CD4-positive, alpha-beta memory T cell (primary cell): ENCODE measurements at regions of chr3 and their contacts with region 1.

Region 1: GRCh38 chr3:43690400-43691119 is at the start of gene ABHD5:
- DNase-seq: peak; percentile 95 to 97 (median 96)
- H3K4me3 ChIP-seq: peak within 1 kb of the TSS; percentile 38 to 98
- H3K4me3 Mint-ChIP-seq: peak within 1 kb of the TSS; percentile 91 to 97 (median 93)
- H3K27ac ChIP-seq: peak within 1 kb of the TSS; percentile 79
- H3K27ac Mint-ChIP-seq: peak within 1 kb of the TSS; percentile 89 to 98 (median 94)
- H3K4me1 ChIP-seq: peaks cover 20% of the 10 kb centered on the region
- H3K4me1 Mint-ChIP-seq: peaks cover 23 to 35% (median 30%) of the 10 kb centered on the region in 4 donors
- H3K27me3 ChIP-seq: no peaks in the 10 kb centered on the region
- H3K27me3 Mint-ChIP-seq: no peaks in the 10 kb centered on the region
- total RNA-seq, gene ABHD5: 6.2 to 7.0 TPM

Region 2: DNA sequence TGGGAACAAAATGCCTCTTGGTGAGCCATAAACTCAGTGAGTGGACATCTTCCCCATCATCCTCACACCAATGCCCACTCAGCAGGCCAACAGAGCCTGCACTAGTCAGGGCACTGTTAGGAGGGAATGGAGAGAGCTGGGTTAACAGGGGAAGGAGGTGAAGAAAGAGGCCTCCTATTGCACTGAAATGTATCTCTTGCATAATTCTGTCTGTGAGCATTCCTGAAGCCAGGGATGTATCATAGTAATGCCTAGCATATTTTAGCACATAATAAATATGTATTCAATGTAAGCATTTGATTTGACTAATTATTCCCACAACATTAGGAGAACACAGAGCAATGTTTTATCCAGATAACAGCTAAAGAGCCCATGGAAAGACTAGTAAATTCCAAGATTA is 149.9 kb before region 1 on chr3:
- CTCF ChIA-PET with region 1: interaction called, 3 read pairs
- POLR2A ChIA-PET with region 1: no interaction called
- intact Hi-C with region 1: loop called (anchors 1 kb)
- DNase-seq: no peak
- H3K4me3 ChIP-seq: no peak overlapping the region
- H3K4me3 Mint-ChIP-seq: no peak overlapping the region
- H3K27ac ChIP-seq: no peak overlapping the region
- H3K27ac Mint-ChIP-seq: no peak overlapping the region
- H3K4me1 ChIP-seq: no peaks in the 10 kb centered on the region
- H3K4me1 Mint-ChIP-seq: no peaks in the 10 kb centered on the region
- H3K27me3 ChIP-seq: no peaks in the 10 kb centered on the region
- H3K27me3 Mint-ChIP-seq: no peaks in the 10 kb centered on the region

Region 3: DNA sequence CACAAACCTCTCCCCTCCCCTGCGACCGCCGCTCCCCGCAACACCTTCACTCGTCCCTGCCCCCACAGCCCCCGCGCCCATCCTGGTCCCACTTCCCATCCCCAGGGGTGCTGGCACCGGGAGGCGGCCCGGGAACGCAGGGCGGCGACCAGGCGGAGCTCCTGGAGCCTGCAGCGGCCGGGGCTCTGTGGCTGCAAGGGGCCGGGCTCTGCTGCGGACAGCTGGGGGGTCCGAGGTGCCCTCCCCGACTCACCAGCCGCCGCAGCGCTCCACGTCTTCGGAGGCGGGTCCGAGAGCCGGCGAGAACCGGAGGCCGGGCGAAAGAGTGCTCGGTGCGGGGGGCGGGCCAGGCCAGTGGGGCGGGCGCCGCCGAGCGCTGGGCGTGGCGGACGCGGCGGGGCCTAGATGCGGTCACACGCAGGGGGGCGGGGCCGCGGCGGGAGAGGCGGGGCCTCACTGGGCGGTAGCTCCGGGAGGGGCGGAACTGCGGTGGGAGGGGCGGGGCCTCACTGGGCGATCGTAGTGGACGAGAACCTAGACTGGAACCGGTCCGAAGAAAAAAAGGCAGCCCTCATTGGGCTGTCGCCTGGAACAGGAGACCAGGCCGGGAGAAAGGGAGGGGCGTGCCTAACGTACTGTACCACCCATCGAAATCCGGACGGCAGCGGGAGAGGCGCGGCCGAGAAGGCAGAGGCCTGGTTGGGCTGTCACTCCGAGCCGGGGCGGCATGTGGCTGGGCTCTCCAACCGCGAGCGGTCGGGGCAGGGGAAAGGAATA is 68.7 kb before region 1 on chr3 and contains the start of gene ANO10:
- CTCF ChIA-PET with region 1: interaction called, 3 read pairs
- POLR2A ChIA-PET with region 1: interaction called, 27 read pairs
- intact Hi-C with region 1: loop called (anchors 1 kb)
- DNase-seq: peak; percentile 91 to 93 (median 93)
- H3K4me3 ChIP-seq: peak within 1 kb of the TSS; percentile 36 to 59
- H3K4me3 Mint-ChIP-seq: peak within 1 kb of the TSS; percentile 88 to 94 (median 91)
- H3K27ac ChIP-seq: peak within 1 kb of the TSS; percentile 54
- H3K27ac Mint-ChIP-seq: peak within 1 kb of the TSS; percentile 77 to 96 (median 91)
- H3K4me1 ChIP-seq: peaks cover 12% of the 10 kb centered on the region
- H3K4me1 Mint-ChIP-seq: peaks cover 10 to 24% (median 13%) of the 10 kb centered on the region in 4 donors
- H3K27me3 ChIP-seq: no peaks in the 10 kb centered on the region
- H3K27me3 Mint-ChIP-seq: no peaks in the 10 kb centered on the region
- total RNA-seq, gene ANO10: 9.7 to 9.9 TPM

Region 4: GRCh38 chr3:43753781-43754201 is 63.2 kb after region 1 on chr3:
- CTCF ChIA-PET with region 1: interaction called, 10 read pairs
- POLR2A ChIA-PET with region 1: interaction called, 26 read pairs
- intact Hi-C with region 1: loop called (anchors 2 kb)
- DNase-seq: no peak
- H3K4me3 ChIP-seq: no peak overlapping the region
- H3K4me3 Mint-ChIP-seq: no peak overlapping the region
- H3K27ac ChIP-seq: no peak overlapping the region
- H3K27ac Mint-ChIP-seq: no peak overlapping the region
- H3K4me1 ChIP-seq: peaks cover 34% of the 10 kb centered on the region
- H3K4me1 Mint-ChIP-seq: peaks cover 25 to 45% (median 37%) of the 10 kb centered on the region in 4 donors
- H3K27me3 ChIP-seq: no peaks in the 10 kb centered on the region
- H3K27me3 Mint-ChIP-seq: no peaks in the 10 kb centered on the region

Region 5: DNA sequence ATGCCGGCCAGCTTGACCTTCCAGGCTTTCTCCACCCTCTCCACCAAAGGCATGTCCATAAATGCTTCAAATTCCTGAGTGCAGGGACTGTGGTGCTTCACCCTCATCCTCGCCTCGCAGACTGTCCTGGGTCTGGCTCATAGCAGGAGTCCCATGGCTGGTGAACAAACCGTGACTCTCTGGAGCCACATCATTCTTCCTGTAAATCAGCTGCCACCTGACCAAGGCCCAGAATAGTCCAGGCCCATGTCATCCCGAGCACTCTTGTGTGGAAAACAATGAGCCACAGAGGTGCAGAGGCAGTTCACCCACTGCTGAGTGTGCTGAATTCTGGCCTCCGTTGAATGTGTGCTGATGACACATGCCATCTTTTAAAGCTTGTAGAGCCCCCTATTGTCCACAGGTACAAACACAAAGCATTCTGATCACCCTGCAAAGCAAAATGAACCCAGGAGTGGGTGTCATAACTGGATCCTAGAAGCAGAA is 68.8 kb after region 1 on chr3:
- CTCF ChIA-PET with region 1: interaction called, 10 read pairs
- POLR2A ChIA-PET with region 1: interaction called, 26 read pairs
- intact Hi-C with region 1: loop called (anchors 2 kb)
- DNase-seq: peak in 2 of 5 donors; percentile 11 to 15
- H3K4me3 ChIP-seq: no peak overlapping the region
- H3K4me3 Mint-ChIP-seq: no peak overlapping the region
- H3K27ac ChIP-seq: no peak overlapping the region
- H3K27ac Mint-ChIP-seq: peak overlapping the region in 2 of 7 donors; percentile 2 to 38
- H3K4me1 ChIP-seq: peaks cover 32% of the 10 kb centered on the region
- H3K4me1 Mint-ChIP-seq: peaks cover 26 to 51% (median 41%) of the 10 kb centered on the region in 4 donors
- H3K27me3 ChIP-seq: no peaks in the 10 kb centered on the region
- H3K27me3 Mint-ChIP-seq: no peaks in the 10 kb centered on the region

Region 6: DNA sequence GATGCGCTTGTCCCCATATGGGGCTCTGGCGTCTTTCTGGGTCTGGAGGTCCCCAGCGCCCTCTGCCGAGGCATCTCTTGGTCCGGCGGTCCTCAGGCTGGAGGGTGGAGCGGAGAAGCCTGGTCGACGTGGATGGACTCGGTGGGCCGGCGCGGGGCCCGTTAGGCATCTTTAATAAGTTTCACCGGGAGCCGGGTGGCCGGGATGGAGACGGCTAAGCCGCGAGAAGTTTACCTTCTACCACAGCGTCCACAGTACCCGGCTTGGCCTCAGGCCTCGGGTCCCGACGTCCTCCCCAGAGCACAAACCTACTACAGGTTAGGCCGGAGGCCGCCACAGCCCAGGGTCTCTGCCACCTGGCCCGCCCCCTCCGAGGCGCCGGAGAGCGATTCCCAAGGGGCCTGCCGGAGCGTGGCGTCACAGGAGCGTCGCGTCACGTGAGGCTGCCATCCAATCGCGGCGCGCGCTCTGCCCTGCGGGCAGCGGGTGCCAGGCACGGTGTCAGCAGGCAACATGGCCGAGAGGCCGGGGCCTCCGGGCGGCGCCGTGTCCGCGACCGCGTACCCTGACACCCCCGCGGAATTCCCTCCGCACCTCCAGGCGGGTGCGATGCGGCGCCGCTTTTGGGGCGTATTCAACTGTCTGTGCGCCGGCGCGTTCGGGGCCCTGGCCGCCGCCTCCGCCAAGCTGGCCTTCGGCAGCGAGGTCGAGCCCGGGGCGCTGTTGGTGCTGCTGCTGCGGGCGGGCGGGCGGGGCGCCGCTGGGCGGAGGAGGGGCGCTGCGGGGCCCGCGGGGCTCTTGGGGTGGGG is 1171.1 kb after region 1 on chr3 and contains the start of gene TMEM42:
- CTCF ChIA-PET with region 1: no interaction called
- POLR2A ChIA-PET with region 1: no interaction called
- intact Hi-C with region 1: loop called (anchors 2 kb)
- DNase-seq: peak; percentile 84 to 91 (median 88)
- H3K4me3 ChIP-seq: peak within 1 kb of the TSS; percentile 46 to 85
- H3K4me3 Mint-ChIP-seq: peak within 1 kb of the TSS; percentile 88 to 93 (median 90)
- H3K27ac ChIP-seq: peak within 1 kb of the TSS; percentile 88
- H3K27ac Mint-ChIP-seq: peak within 1 kb of the TSS; percentile 90 to 98 (median 94)
- H3K4me1 ChIP-seq: peaks cover 38% of the 10 kb centered on the region
- H3K4me1 Mint-ChIP-seq: peaks cover 19 to 47% (median 36%) of the 10 kb centered on the region in 4 donors
- H3K27me3 ChIP-seq: no peaks in the 10 kb centered on the region
- H3K27me3 Mint-ChIP-seq: no peaks in the 10 kb centered on the region
- total RNA-seq, gene TMEM42: 26.1 to 29.6 TPM